ENCODE measurements at regions of chr18 and their contacts with region 1.

Region 1: DNA sequence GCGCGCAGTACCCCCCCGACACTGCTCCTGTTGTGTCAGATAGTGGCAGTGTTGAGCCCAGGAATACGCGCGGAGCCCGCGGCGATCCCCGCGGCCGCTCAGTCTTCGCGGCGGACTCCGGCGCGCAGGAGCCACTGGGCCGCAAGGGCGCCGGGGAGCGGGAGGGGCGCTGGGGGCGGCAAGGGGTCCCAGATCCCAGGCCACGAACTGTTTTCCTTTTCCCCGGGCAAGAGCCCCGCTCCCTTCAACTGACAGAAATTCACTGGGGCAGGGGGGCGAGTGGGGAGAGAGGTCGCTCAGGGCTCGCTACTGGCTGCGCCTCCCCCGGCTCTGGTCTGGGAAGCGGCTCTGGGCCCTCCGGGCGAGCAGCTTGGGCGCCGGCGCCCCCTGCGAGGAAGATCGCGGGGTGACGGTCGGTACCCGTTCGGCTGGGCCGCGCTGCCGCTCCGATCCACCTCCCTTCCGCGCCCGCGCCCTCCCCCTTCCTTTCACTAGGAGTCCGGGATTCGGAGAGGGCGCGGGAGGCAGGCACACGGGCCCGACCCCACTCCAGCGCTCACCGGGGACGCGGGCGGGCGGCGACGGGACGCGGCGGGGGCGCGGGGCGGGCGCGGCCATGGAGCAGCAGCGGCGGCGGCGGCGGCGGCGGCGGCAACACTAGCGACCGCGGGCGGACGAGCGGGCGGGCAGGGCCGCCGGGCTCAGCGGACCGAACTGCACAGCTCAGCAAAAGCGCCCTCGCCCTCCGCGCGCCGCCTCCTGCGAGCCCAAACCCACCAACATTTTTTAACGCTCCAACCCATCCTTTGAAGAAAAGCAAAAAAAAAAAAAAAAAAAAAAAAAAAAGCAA is 1.4 kb upstream of the SETBP1 start:
- DNase-seq: peak; percentile 88
- H3K4me3 ChIP-seq: peak overlapping the region; percentile 73
- H3K27ac ChIP-seq: peak overlapping the region; percentile 93
- H3K4me1 ChIP-seq: no peaks in the 10 kb centered on the region
- H3K27me3 ChIP-seq: no peaks in the 10 kb centered on the region
- CTCF ChIP-seq: peak; percentile 63

Region 2: DNA sequence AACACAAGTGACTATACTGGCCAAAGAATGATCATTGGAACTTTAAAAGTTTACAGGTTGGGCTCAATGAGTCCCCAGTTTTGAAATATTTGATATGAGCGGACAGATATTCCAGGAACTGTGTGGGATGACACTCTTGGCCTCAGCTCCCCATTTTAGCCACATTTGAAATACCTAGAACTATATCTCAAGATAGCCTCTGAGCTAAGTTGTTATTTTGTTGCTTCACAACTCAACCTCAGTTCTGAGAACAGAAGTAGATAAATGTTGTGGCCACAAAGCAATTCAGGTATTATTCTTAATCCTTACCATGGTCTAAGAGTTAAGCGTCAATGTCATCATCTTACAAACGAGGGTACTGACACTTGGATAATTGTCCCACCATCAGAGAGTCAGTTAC is 170.8 kb before region 1 on chr18:
- intact Hi-C with region 1: no loop called
- DNase-seq: no peak
- H3K4me3 ChIP-seq: no peak overlapping the region
- H3K27ac ChIP-seq: no peak overlapping the region
- H3K4me1 ChIP-seq: no peaks in the 10 kb centered on the region
- H3K27me3 ChIP-seq: no peaks in the 10 kb centered on the region
- CTCF ChIP-seq: no peak

Region 3: DNA sequence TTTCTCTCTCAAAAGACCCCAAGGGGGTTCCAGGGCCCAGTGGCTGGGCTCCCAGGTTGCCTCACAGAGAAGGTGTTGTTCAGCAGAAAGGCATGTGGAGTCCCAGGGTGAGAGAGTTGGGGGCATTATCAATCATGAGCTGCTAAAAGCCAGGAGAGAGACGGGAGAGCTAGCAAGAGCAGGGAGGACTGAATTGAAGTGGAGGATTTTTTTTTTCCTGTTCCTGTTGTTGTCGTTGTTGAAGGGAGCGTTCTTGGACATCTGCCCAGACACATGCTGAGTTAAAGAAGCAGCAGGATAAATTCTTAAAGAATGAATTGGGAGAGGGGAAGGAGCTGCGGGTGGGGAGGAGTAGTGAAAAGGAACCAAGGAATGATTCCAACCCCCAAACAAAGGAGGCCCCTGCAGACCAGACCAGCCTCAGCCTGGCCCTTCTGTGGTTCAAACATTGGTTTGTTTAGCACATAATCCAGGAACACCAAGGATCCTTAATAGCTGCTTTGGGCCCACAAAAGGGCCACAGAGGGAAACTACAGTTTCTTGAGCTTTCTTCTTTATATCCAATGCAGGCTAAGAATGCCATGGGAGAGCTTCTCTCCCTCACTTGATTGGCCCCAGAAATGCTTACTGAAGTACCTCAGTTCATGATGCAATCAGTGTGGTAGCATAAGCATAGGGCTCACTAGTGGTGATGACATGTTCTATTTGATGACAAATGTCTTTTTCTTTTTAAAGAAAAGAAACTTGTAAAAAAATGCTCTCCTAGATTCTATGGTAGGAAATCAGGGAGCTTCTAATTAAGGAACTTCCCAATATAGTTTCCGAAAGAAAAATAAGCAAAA is 147.4 kb after region 1 on chr18:
- intact Hi-C with region 1: loop called (anchors 10 kb)
- DNase-seq: peak; percentile 84
- H3K4me3 ChIP-seq: no peak overlapping the region
- H3K27ac ChIP-seq: peak overlapping the region; percentile 30
- H3K4me1 ChIP-seq: peaks cover 4% of the 10 kb centered on the region
- H3K27me3 ChIP-seq: no peaks in the 10 kb centered on the region
- CTCF ChIP-seq: no peak

Region 4: GRCh38 chr18:44895176-44895798 is 216.0 kb after region 1 on chr18:
- intact Hi-C with region 1: loop called (anchors 5 kb)
- DNase-seq: peak; percentile 82
- H3K4me3 ChIP-seq: no peak overlapping the region
- H3K27ac ChIP-seq: no peak overlapping the region
- H3K4me1 ChIP-seq: no peaks in the 10 kb centered on the region
- H3K27me3 ChIP-seq: no peaks in the 10 kb centered on the region
- CTCF ChIP-seq: peak; percentile 55